Activated CD4-positive, alpha-beta T cell treated with anti-CD3 and anti-CD28 coated beads for 36 hours (primary cell): ENCODE measurements at regions of chr9 and their contacts with region 1.

Region 1: DNA sequence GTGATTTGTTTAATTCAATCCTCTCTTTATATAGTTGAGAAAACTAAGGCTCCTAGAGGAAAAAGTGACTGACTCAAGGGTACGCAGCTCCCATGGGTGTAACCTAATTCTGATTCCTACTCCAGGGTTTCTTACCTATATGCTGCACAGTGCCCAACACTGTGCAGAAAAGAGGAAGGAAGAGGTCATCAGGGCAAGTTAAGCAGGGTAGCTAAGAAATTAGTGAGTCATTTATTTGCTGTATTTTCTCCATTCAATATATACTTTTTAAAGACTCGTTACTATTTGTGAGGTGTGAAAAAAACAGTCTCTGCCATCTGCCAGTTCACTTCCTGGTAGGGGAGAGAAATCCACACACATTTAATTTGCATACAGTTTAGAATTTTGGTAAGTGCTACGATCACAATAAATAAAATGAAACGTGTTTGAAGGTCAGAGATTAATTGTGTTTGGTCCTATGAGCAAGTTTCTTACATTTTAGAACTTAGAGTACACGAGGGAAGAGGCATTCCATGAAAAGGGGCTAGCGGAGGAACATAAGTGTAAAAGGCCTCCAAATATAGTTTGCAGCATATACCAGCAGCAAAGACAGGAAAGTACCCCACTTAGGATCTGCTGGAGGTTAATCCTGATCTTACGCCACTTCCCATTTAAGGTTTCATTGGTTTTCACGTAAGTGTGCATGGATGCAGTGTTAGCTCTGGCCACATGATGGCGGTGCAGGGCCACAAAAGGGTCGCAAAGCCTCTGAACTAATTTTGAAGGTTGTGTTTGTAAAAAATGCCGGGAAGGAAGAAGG is 59.9 kb upstream of the TLR4 start:
- DNase-seq: peak; percentile 72
- ATAC-seq: no peak
- H3K4me3 Mint-ChIP-seq: no peak overlapping the region
- H3K27ac Mint-ChIP-seq: no peak overlapping the region
- H3K4me1 Mint-ChIP-seq: peaks cover 5% of the 10 kb centered on the region
- H3K27me3 Mint-ChIP-seq: peaks cover 35% of the 10 kb centered on the region

Region 2: DNA sequence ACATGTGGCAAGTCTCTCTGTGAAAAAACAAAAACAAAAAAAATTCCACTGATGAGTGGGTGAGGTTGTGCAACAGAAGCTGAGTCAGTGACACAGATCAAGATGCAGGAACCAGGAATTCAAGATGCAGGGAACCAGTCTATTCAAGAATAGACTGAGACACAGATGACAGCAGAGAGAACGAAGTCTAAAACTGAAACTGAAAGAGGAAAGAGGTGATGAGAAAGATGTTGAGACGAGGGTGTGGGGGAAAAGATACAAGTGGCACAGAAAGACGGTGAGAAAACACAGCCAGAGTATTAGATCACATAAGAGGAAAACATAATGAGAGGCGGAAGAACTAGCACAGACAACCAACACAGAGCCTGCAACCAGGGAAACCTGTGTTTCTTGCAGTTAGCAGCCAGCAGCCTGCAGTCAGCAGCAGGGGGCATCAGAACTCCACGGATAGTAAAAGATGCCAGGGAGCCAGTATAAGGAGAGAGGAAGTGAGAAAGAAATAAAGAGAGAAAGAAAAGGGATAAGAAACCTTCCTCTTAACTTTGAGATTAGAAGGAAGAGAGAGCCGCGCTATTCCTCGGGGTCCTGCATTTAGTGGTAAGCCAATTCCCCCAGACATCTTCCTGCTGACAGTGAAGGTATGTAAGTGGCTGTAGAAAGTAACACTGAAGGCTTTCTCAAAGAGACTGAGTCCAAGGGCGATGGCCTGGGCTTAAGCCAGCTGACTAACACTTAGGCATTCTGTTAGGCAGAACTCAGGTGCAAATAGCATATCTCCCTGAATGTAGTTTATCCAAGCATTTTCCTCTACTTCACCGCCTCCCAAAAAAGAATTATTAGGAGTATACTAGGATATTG is 138.8 kb after region 1 on chr9:
- CTCF ChIA-PET with region 1: no interaction called
- POLR2A ChIA-PET with region 1: no interaction called
- intact Hi-C with region 1: loop called in 1 of 2 experiments (anchors 10 kb)
- DNase-seq: peak; percentile 73
- ATAC-seq: peak; percentile 85
- H3K4me3 Mint-ChIP-seq: no peak overlapping the region
- H3K27ac Mint-ChIP-seq: no peak overlapping the region
- H3K4me1 Mint-ChIP-seq: peaks cover 2% of the 10 kb centered on the region
- H3K27me3 Mint-ChIP-seq: peaks cover 4% of the 10 kb centered on the region

Region 3: GRCh38 chr9:118038713-118039112 is 394.4 kb after region 1 on chr9:
- CTCF ChIA-PET with region 1: no interaction called
- POLR2A ChIA-PET with region 1: no interaction called
- intact Hi-C with region 1: loop called in 1 of 2 experiments (anchors 10 kb)
- DNase-seq: no peak
- ATAC-seq: no peak
- H3K4me3 Mint-ChIP-seq: no peak overlapping the region
- H3K27ac Mint-ChIP-seq: no peak overlapping the region
- H3K4me1 Mint-ChIP-seq: no peaks in the 10 kb centered on the region
- H3K27me3 Mint-ChIP-seq: peaks cover 3% of the 10 kb centered on the region

Region 4: DNA sequence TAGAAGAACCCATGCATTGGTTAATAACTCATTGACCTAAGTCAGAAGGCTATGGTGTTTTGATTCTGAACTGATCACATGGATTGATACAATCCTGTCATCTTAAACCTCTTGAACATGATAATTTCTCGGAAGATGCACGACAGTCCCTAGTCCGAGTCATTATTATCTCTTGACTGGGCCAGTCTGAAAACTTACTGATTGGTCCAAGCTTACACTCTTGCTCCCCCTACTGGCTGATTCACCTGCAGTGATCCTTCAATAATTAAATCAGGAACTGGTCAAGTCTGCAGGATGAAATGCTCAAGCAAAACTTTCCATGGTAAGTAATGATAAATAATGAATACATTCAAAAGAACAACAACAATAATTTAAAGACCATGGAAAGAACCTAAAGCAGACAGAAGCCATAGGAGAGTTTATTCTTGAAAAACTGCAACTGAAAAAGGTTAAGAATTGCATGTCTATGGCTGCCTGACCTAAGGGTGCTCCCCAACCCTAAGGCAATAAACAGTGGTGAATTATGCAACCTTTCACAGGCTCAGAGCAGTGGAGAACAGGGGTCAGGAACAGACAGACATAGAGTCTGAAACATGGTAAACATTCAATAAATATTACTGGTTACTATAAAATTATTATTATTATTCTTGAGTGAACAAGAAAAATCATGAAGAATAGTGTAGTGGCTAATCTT is 1645.6 kb after region 1 on chr9:
- CTCF ChIA-PET with region 1: no interaction called
- POLR2A ChIA-PET with region 1: no interaction called
- intact Hi-C with region 1: loop called (anchors 5 to 10 kb)
- DNase-seq: peak; percentile 35
- ATAC-seq: no peak
- H3K4me3 Mint-ChIP-seq: no peak overlapping the region
- H3K27ac Mint-ChIP-seq: no peak overlapping the region
- H3K4me1 Mint-ChIP-seq: no peaks in the 10 kb centered on the region
- H3K27me3 Mint-ChIP-seq: peaks cover 6% of the 10 kb centered on the region

Region 5: GRCh38 chr9:119365291-119366027 is 1721.1 kb after region 1 on chr9:
- CTCF ChIA-PET with region 1: no interaction called
- POLR2A ChIA-PET with region 1: no interaction called
- intact Hi-C with region 1: loop called in 1 of 2 experiments (anchors 10 kb)
- DNase-seq: peak; percentile 17
- ATAC-seq: no peak
- H3K4me3 Mint-ChIP-seq: no peak overlapping the region
- H3K27ac Mint-ChIP-seq: no peak overlapping the region
- H3K4me1 Mint-ChIP-seq: peaks cover 3% of the 10 kb centered on the region
- H3K27me3 Mint-ChIP-seq: peaks cover 21% of the 10 kb centered on the region